ENCODE measurements at regions of chr2 and their contacts with region 1.

Region 1: GRCh38 chr2:199979832-199980628 is 24.6 kb downstream of the MAIP1 start:
- DNase-seq: peak; percentile 92
- H3K4me3 ChIP-seq: peak overlapping the region in 2 of 8 donors; percentile 17 to 31
- H3K27ac ChIP-seq: peak overlapping the region in 5 of 8 donors; percentile 37 to 64 (median 41)
- H3K4me1 ChIP-seq: peaks cover 0 to 25% (median 8%) of the 10 kb centered on the region in 6 donors
- H3K27me3 ChIP-seq: no peaks in the 10 kb centered on the region
- CTCF ChIP-seq: peak; percentile 53 to 88 (median 82)
- POLR2A ChIP-seq: no peak

Region 2: DNA sequence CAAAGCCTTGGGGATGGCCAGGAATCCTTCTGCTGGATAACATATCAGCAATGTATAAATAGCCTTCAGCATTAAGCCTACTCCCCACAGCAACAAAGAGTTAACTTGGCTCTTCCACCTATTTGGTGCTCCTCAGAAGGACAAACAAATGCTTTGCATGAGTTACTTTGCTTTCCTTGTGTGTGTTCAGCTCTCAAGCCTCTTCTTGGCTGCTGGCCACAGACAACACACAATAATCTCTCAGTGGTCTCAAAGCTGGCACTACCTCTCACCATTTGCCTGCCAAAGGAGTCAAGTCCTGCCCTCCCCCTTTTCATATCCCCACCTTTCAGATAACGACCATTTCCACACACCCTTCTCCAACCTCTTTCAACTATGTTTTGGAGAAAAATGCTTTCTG is 146.5 kb before region 1 on chr2:
- intact Hi-C with region 1: no loop called
- DNase-seq: no peak
- H3K4me3 ChIP-seq: no peak overlapping the region
- H3K27ac ChIP-seq: no peak overlapping the region
- H3K4me1 ChIP-seq: no peaks in the 10 kb centered on the region
- H3K27me3 ChIP-seq: no peaks in the 10 kb centered on the region
- CTCF ChIP-seq: no peak
- POLR2A ChIP-seq: no peak

Region 3: DNA sequence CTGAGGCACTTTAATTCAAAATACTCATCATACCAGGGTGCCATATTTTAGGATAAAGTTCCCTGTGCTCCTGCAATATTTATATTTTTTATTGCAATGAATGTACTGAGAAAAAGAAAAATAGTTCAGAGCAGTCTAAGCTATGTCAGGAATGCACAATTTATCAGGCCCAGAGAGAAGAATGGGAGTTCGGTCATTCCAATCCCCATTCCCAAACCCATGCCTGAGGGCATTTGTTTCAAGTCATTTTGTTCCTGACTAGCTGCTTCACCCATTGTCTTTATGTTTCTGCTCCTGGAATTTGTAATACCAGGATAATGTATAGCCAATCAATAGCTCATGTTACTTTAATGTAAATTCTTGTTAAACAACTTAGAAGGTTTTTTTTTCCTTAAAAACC is 104.6 kb before region 1 on chr2:
- intact Hi-C with region 1: no loop called
- DNase-seq: no peak
- H3K4me3 ChIP-seq: no peak overlapping the region
- H3K27ac ChIP-seq: no peak overlapping the region
- H3K4me1 ChIP-seq: no peaks in the 10 kb centered on the region
- H3K27me3 ChIP-seq: no peaks in the 10 kb centered on the region
- CTCF ChIP-seq: no peak
- POLR2A ChIP-seq: no peak

Region 4: GRCh38 chr2:200483729-200484198 is 503.7 kb after region 1 on chr2:
- intact Hi-C with region 1: loop called (anchors 5 kb)
- DNase-seq: no peak
- H3K4me3 ChIP-seq: no peak overlapping the region
- H3K27ac ChIP-seq: no peak overlapping the region
- H3K4me1 ChIP-seq: peaks cover 0 to 12% (median 5%) of the 10 kb centered on the region in 6 donors
- H3K27me3 ChIP-seq: no peaks in the 10 kb centered on the region
- CTCF ChIP-seq: peak in 2 of 11 experiments; percentile 12 to 17
- POLR2A ChIP-seq: no peak